Activated T-helper 1 cell treated with anti-CD3 and anti-CD28 coated beads, Interleukin-12 subunit alpha, Interleukin-12 subunit beta, Interleukin-2, Interleukin-4 antibody, amounts not matched to agents 30 ng/mL and 10 ng/mL and 1 ng/mL, durations not matched to agents 14 hours and 24 hours and 36 hours (primary cell): ENCODE measurements at regions of chr2 and their contacts with region 1.

Region 1: GRCh38 chr2:28392297-28393113 is at the start of gene FOSL2:
- DNase-seq: peak; percentile 94
- H3K4me3 Mint-ChIP-seq: peak within 1 kb of the TSS; percentile 87
- H3K27ac Mint-ChIP-seq: peak within 1 kb of the TSS; percentile 99
- H3K4me1 Mint-ChIP-seq: peaks cover 25% of the 10 kb centered on the region
- H3K27me3 Mint-ChIP-seq: no peaks in the 10 kb centered on the region
- total RNA-seq, gene FOSL2: 54.9 and 55.0 TPM in 2 replicates

Region 2: GRCh38 chr2:27663463-27664249 is 728.8 kb before region 1 on chr2 and contains the starts of genes SLC4A1AP and SUPT7L:
- intact Hi-C with region 1: loop called (anchors 1 kb)
- DNase-seq: peak; percentile 70
- H3K4me3 Mint-ChIP-seq: peak within 1 kb of the TSS; percentile 96
- H3K27ac Mint-ChIP-seq: peak within 1 kb of the TSS; percentile 97
- H3K4me1 Mint-ChIP-seq: peaks cover 55% of the 10 kb centered on the region
- H3K27me3 Mint-ChIP-seq: no peaks in the 10 kb centered on the region
- total RNA-seq, gene SLC4A1AP: 29.7 and 29.8 TPM in 2 replicates
- total RNA-seq, gene SUPT7L: 32.5 and 35.2 TPM in 2 replicates

Region 3: GRCh38 chr2:27754138-27754588 is 638.3 kb before region 1 on chr2:
- intact Hi-C with region 1: loop called (anchors 2 kb)
- DNase-seq: peak; percentile 62
- H3K4me3 Mint-ChIP-seq: no peak overlapping the region
- H3K27ac Mint-ChIP-seq: no peak overlapping the region
- H3K4me1 Mint-ChIP-seq: no peaks in the 10 kb centered on the region
- H3K27me3 Mint-ChIP-seq: peaks cover 4% of the 10 kb centered on the region

Region 4: DNA sequence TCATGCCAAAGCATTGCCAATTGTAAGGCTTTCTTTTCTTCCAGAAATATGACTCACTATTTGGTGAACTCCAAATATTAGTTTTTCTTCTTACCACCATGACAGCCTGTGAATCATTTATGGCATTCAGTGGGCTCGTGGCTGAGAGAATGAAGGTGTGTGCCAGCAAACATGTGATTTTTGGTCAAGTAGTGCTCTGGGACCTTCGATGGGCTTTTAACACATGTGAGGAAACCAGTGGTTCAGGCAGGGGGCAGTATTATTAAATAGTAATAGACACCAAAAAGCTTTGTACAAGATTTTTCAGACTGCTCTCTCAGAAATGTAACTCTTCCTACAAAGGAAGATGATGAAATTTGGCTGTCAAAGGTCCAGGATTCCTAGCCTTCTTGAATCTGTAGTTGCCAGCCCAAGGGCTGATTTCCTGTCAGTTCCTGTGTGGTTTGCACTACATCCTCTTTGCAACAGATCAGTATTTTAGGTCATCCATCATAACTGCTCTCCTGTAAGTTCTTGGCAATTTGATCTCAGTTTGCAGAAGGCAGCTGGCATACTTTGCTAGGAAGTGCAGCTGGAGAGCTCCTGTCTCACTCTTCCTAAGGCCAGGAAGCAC is 437.6 kb before region 1 on chr2:
- intact Hi-C with region 1: loop called (anchors 5 kb)
- DNase-seq: peak; percentile 21
- H3K4me3 Mint-ChIP-seq: peak overlapping the region; percentile 49
- H3K27ac Mint-ChIP-seq: peak overlapping the region; percentile 65
- H3K4me1 Mint-ChIP-seq: peaks cover 80% of the 10 kb centered on the region
- H3K27me3 Mint-ChIP-seq: no peaks in the 10 kb centered on the region

Region 5: DNA sequence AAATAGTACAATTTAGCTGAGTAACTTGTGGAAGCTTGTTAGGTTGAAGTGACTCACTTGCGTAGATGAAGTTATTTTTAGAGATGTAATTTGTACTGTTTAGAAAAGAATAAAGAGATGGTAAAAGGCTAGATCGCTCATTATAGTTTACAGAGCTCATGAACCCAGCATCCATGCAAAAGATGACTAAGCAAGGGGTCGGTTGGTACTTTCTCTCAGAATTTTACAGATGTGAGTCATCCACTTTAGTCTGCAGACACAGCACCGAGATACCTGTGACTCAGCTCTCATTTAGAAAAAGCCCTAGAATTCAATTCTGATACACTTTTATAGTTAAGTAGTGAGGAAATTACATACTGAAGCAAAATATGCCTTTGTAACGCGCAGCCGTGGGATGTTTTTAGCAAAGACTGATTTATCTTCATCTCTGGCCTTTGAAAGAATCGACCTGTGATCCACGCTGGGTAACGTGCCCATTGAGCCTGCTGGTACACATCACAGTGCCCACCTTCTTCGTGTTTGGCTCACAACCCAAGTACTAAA is 116.4 kb before region 1 on chr2:
- intact Hi-C with region 1: loop called (anchors 1 kb)
- DNase-seq: no peak
- H3K4me3 Mint-ChIP-seq: peak overlapping the region; percentile 41
- H3K27ac Mint-ChIP-seq: peak overlapping the region; percentile 30
- H3K4me1 Mint-ChIP-seq: peaks cover 61% of the 10 kb centered on the region
- H3K27me3 Mint-ChIP-seq: peaks cover 6% of the 10 kb centered on the region

Region 6: DNA sequence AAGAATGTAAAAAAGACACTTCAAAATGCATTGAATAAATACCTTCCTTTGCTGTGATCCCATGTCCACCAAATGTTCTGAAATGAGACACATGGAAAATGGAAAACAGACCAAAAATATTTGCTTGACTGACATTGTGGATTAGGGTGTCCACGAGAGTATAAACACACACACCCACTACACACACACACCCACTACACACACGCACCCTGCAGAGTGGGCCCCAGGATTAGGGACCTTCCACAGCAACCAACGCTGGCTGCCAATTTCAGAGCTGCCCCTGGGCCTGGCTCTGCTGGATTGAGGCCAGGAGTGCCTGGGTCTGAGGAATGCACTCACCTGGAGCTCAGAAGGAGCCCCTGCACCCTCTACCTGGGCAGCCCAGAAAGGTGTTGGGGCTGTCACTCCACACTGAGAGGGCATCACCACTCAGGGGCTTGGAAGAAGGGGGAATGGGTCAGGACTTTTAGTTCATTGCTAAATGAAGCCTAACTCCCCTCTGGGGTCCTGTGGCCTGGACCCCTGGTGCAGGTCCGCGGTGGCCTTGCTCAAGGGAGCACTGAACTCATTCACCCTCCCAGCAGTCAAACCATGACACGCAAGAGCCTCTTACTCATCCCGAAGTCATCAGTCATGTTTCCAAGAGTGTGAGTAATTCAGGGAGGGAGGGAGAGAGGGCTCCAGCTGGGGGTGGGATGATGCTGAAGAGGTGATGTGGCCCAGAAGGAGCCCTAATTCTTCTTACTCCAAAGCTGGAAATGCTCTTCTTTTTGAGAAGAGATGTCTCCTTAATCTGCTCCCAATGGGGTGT is 53.1 kb after region 1 on chr2:
- intact Hi-C with region 1: loop called (anchors 1 kb)
- DNase-seq: no peak
- H3K4me3 Mint-ChIP-seq: peak overlapping the region; percentile 40
- H3K27ac Mint-ChIP-seq: peak overlapping the region; percentile 82
- H3K4me1 Mint-ChIP-seq: peaks cover 78% of the 10 kb centered on the region
- H3K27me3 Mint-ChIP-seq: no peaks in the 10 kb centered on the region

Region 7: DNA sequence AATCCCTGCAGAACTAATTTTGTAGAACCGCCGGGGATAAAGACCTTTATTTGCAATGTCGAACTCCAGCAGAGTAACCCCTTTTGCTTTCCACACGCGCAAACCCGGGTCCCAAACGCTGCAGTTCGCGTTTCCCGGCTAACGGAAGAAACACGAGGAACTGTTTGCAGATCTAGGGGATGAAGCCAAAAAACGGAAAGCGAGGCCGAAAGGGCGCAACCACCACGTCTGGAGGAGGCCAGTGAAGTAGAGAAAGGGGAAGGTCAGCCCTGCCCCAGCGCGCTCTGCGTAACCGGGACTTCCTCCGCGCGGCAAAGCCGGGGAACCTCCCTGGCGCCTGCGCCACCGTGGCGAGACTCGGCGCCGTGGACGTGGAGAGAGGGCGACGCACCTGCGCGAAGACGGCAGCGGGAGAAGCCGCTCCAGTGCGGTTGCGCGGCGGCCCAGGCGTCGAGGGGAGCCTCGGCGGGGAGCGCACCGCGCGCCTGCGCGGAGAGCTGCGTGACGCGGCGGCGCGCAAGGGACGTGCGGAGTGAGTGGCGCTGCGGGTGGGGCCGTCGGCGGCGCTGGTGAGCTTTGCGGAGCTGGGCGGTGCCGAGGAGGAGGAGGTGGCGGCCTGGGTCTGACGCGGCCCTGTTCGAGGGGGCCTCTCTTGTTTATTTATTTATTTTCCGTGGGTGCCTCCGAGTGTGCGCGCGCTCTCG is 358.9 kb after region 1 on chr2 and contains the start of gene PPP1CB:
- intact Hi-C with region 1: loop called (anchors 2 kb)
- DNase-seq: peak; percentile 98
- H3K4me3 Mint-ChIP-seq: peak within 1 kb of the TSS; percentile 95
- H3K27ac Mint-ChIP-seq: peak within 1 kb of the TSS; percentile 96
- H3K4me1 Mint-ChIP-seq: peaks cover 62% of the 10 kb centered on the region
- H3K27me3 Mint-ChIP-seq: no peaks in the 10 kb centered on the region
- total RNA-seq, gene PPP1CB: 262 and 268 TPM in 2 replicates